HCT116 (cell line): ENCODE measurements at regions of chr4 and their contacts with region 1.

Region 1: DNA sequence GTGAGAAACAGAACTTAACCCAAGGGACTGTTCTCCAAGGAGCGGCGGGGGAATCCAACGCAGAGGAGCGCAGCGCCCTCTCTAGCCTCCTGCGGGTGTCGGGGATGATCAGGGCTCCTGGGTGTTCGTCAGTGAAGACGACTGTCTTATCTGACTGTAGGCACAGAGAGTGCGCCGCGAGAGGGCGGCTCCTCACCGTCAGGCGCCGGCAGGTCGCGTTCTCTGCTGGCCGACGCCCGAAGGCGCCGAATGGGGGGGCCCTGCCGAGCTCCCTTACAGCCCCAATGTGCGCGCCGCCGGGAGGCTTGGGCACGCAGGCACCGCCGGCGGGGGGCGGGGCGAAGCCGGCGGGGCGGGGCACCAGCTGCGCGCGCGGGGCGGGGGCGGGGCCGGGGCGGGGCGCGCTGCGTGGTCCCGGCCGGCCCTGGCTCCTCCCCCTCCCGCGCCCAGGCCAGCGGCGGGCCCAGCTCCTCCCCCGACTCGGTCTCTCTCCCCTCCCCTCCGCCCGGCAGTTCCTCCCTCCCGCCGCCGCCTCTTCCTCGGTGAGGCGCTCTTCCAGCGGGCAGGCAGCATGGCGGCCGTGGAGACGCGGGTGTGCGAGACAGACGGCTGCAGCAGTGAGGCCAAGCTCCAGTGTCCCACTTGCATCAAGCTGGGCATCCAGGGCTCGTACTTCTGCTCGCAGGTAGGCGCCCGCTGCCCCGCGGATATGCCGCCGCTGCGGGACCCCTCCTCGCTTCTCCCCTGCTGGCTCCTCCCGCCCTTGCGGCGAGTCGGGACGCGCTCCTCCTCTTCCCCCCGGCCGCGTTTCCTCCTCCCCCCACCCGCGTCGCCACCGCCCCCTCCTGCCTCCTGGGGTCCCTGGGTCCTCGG is at the start of gene METAP1:
- DNase-seq: peak; percentile 94
- ATAC-seq: peak; percentile 90
- H3K4me3 ChIP-seq: peak within 1 kb of the TSS; percentile 72 to 73
- H3K27ac ChIP-seq: peak within 1 kb of the TSS; percentile 87
- H3K4me1 ChIP-seq: peaks cover 12 to 26% of the 10 kb centered on the region in 2 experiments
- H3K27me3 ChIP-seq: no peaks in the 10 kb centered on the region
- CTCF ChIP-seq: peak in 2 of 3 experiments; percentile 45 to 52; a peak in 5 of 6 replicates
- POLR2A ChIP-seq: peak; percentile 63
- RAD21 ChIP-seq: peak; percentile 92
- total RNA-seq, gene METAP1: 112 TPM

Region 2: DNA sequence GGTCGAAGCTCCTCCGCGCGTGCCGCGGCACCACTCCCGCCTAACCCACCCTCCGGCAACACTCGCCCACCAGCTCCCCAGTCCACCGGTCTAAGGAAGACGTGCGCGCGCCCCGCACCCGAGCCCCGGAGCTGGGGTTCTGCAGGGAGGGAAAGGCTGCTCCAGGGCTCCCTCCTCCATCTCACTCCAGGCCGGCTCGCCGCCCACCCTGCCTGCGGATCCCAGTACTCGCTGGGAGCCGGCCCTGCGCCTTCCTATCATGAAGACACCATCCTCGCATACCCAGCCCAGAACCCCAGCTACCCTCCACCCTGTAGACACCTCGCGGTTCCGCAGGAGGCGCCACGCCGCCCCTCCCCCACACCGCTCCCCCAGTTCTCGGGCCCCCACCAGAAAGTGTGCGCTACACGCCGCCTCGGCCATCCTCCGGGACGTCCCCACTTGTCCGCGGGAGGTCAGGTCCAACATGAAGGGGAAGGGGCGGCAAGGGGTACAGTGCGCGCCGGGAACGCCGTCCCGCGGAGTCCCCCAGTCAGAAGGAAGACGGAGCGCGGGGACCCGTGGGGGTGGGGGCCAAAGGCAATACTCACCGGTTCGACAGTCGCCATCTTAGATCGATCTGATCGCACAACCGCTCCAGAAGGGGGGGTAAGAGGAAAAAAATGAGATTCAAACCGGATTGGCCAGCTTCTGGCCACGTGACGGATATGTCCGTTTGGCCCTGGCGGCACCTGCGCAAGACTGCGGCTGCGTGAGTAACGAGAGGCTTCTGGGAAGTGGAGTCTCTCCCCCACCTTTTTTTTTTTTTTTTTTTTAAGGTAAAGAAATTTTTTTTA is 66.7 kb before region 1 on chr4 and contains the start of gene EIF4E:
- CTCF ChIA-PET with region 1: interaction called, 4 read pairs
- POLR2A ChIA-PET with region 1: interaction called, 13 read pairs
- RAD21 ChIA-PET with region 1: no interaction called
- intact Hi-C with region 1: loop called (anchors 1 kb)
- DNase-seq: peak; percentile 99
- ATAC-seq: peak; percentile 73
- H3K4me3 ChIP-seq: peak within 1 kb of the TSS; percentile 90 to 93
- H3K27ac ChIP-seq: peak within 1 kb of the TSS; percentile 95
- H3K4me1 ChIP-seq: peaks cover 14 to 29% of the 10 kb centered on the region in 2 experiments
- H3K27me3 ChIP-seq: no peaks in the 10 kb centered on the region
- CTCF ChIP-seq: peak in 2 of 3 experiments; percentile 19 to 24; a peak in 2 of 6 replicates
- POLR2A ChIP-seq: peak; percentile 32
- RAD21 ChIP-seq: no peak
- total RNA-seq, gene EIF4E: 148 TPM